GM13977 (cell line): ENCODE measurements at regions of chr4 and their contacts with region 1.

Region 1: DNA sequence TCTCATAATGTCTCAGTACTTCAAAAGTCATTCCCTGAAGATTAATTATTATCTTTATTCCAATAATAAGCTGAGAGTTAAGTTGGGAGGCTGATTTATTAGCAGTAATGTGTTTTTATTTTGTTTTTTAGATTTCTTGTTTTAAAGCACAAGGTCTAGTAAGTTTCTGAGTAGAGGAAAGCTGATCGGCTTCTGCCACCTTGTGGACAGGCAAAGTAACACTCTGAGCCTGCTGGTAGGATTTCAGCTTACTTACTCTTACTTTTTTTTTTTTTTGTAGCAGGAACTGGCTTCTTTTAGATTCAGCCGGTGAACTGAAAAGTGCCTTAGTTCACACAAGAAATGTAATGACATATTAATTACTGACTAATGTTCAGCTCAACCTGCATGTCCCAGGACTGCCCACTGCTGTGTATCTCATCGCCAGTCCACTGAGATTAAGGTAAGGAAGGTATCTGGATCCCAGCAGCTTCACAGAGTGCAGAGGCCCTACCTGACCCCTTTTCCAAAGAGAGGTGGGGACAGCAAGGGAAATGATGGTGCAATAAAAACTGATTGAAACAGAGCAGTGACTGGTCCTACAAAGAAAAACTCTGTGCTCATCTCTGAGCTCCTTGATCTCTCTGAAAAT is 126.5 kb downstream of the ADGRA3 start:
- DNase-seq: peak; percentile 22
- CTCF ChIP-seq: peak; percentile 78

Region 2: DNA sequence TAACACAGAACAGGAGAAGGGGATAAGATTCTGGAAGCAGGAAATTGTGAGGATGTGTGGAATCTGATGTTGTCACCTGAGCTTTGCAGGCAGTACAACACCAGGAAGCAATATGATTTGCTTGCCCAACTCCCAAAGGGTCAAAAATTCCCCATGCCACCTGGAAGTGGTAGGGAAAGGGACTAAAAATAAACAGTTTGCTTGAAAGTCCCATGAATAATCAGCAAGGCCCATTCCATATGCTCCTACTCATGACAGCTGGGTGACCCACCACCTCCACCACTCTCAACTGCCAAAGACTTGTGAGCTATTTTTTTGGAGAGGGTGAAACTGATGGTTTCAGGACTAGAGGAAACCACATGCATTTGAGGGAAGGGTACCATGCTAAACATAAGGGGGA is 609.2 kb before region 1 on chr4:
- in situ Hi-C with region 1: loop called (anchors 10 kb)
- DNase-seq: no peak
- CTCF ChIP-seq: no peak